CD8-positive, alpha-beta T cell (primary cell): ENCODE measurements at regions of chr16 and their contacts with region 1.

Region 1: DNA sequence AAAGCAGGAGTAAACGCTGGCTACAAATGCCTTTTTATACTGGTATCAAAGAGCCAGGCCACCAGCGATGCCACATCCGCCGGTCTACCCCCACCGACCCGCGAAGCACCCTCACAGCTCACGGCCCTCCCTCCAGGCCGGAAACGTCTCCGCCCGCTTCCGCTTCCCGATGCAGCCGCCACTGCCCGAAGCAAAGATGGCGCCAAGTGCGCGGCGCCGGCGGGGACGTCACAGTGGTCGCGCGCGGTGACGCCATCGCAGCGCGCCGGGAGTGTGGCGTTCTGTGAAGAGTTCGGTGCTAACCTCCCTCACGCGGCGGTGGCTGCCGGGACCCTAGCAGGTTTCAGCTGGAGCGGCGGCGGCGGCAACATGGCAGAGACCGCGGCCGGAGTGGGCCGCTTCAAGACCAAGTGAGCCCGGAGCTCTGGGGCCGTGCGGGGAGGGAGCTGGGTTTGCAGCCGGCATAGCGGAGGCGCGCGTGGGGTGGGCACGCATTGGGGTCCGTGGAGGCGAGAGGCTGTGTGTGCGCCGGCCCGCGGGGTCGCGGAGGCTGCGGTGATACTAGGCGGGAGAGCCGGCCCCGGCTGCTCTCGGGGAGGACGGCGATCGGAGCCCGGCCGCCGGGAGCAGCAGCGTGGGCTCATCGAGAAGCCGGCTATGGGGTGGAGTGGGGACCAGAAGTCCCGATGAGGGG is at the start of gene TBL3:
- DNase-seq: peak; percentile 91 to 99 (median 97)
- ATAC-seq: peak; percentile 96
- H3K4me3 ChIP-seq: peak within 1 kb of the TSS; percentile 76 to 91
- H3K4me3 Mint-ChIP-seq: peak within 1 kb of the TSS; percentile 93
- H3K27ac ChIP-seq: peak within 1 kb of the TSS; percentile 86 to 94
- H3K27ac Mint-ChIP-seq: peak within 1 kb of the TSS; percentile 97
- H3K4me1 ChIP-seq: peaks cover 17% of the 10 kb centered on the region
- H3K4me1 Mint-ChIP-seq: peaks cover 16% of the 10 kb centered on the region
- H3K27me3 ChIP-seq: no peaks in the 10 kb centered on the region
- H3K27me3 Mint-ChIP-seq: no peaks in the 10 kb centered on the region
- CTCF ChIP-seq: no peak
- total RNA-seq, gene TBL3: 15.4 to 16.6 TPM

Region 2: GRCh38 chr16:1705688-1706385 is 266.1 kb before region 1 on chr16 and contains the start of gene MAPK8IP3:
- CTCF ChIA-PET with region 1: no interaction called
- POLR2A ChIA-PET with region 1: no interaction called
- intact Hi-C with region 1: loop called in 1 of 2 experiments (anchors 1 kb)
- DNase-seq: peak; percentile 88 to 99 (median 95)
- ATAC-seq: peak; percentile 74
- H3K4me3 ChIP-seq: peak within 1 kb of the TSS; percentile 94 to 99
- H3K4me3 Mint-ChIP-seq: peak within 1 kb of the TSS; percentile 99
- H3K27ac ChIP-seq: peak within 1 kb of the TSS; percentile 83 to 90
- H3K27ac Mint-ChIP-seq: peak within 1 kb of the TSS; percentile 97
- H3K4me1 ChIP-seq: peaks cover 32% of the 10 kb centered on the region
- H3K4me1 Mint-ChIP-seq: peaks cover 43% of the 10 kb centered on the region
- H3K27me3 ChIP-seq: no peaks in the 10 kb centered on the region
- H3K27me3 Mint-ChIP-seq: no peaks in the 10 kb centered on the region
- CTCF ChIP-seq: peak; percentile 92
- total RNA-seq, gene MAPK8IP3: 381 to 419 TPM

Region 3: GRCh38 chr16:1772736-1773584 is 199.0 kb before region 1 on chr16 and contains the starts of genes EME2 and MRPS34:
- CTCF ChIA-PET with region 1: no interaction called
- POLR2A ChIA-PET with region 1: no interaction called
- intact Hi-C with region 1: no loop called
- DNase-seq: peak; percentile 54 to 89 (median 78)
- ATAC-seq: peak; percentile 48
- H3K4me3 ChIP-seq: peak within 1 kb of the TSS; percentile 79 to 91
- H3K4me3 Mint-ChIP-seq: peak within 1 kb of the TSS; percentile 96
- H3K27ac ChIP-seq: peak within 1 kb of the TSS; percentile 57 to 66
- H3K27ac Mint-ChIP-seq: peak within 1 kb of the TSS; percentile 96
- H3K4me1 ChIP-seq: peaks cover 30% of the 10 kb centered on the region
- H3K4me1 Mint-ChIP-seq: peaks cover 19% of the 10 kb centered on the region
- H3K27me3 ChIP-seq: no peaks in the 10 kb centered on the region
- H3K27me3 Mint-ChIP-seq: no peaks in the 10 kb centered on the region
- CTCF ChIP-seq: peak; percentile 92
- total RNA-seq, gene EME2: 27.5 to 31.7 TPM
- total RNA-seq, gene MRPS34: 18.9 to 21.4 TPM

Region 4: GRCh38 chr16:1959269-1960049 is 12.5 kb before region 1 on chr16 and contains the start of gene NDUFB10:
- CTCF ChIA-PET with region 1: interaction called, 7 read pairs
- POLR2A ChIA-PET with region 1: interaction called, 23 read pairs
- intact Hi-C with region 1: loop called (anchors 1 kb)
- DNase-seq: peak; percentile 80 to 96 (median 92)
- ATAC-seq: peak; percentile 86
- H3K4me3 ChIP-seq: peak within 1 kb of the TSS; percentile 91 to 95
- H3K4me3 Mint-ChIP-seq: peak within 1 kb of the TSS; percentile 90
- H3K27ac ChIP-seq: peak within 1 kb of the TSS; percentile 75 to 80
- H3K27ac Mint-ChIP-seq: peak within 1 kb of the TSS; percentile 89
- H3K4me1 ChIP-seq: peaks cover 39% of the 10 kb centered on the region
- H3K4me1 Mint-ChIP-seq: peaks cover 39% of the 10 kb centered on the region
- H3K27me3 ChIP-seq: no peaks in the 10 kb centered on the region
- H3K27me3 Mint-ChIP-seq: no peaks in the 10 kb centered on the region
- CTCF ChIP-seq: peak; percentile 59
- total RNA-seq, gene NDUFB10: 36.2 to 38.4 TPM

Region 5: DNA sequence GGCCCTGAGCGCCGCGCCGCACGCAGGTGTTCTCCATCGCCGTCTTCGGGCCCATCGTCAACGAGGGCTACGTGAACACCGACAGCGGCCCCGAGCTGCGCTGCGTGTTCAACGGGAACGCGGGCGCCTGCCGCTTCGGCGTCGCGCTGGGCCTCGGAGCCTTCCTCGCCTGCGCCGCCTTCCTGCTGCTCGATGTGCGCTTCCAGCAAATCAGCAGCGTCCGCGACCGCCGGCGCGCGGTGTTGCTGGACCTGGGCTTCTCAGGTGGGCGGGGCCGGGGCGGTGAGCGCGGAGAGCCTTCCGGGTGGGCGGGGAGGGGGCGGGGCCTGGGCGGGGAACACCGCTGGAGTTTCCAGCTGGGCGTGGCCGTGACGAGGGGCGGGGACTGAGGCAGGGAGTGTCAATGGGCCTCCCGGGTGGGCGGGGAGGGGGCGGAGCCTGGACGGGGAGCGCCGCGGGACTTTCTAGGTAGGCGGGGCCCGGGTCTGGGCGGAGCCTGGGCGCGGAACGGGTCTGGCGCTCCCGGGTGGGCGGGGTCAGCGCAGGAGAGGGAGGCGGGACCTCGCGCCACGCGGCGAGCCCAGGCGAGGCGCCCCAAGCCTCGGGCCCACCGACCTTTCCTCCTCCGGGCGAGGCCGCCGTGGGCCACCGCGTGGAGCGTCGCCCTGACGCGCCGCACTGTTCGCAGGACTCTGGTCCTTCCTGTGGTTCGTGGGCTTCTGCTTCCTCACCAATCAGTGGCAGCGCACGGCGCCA is 20.2 kb after region 1 on chr16:
- CTCF ChIA-PET with region 1: no interaction called
- POLR2A ChIA-PET with region 1: interaction called, 15 read pairs
- intact Hi-C with region 1: loop called in 1 of 2 experiments (anchors 1 kb)
- DNase-seq: peak; percentile 95 to 99 (median 97)
- ATAC-seq: peak; percentile 88
- H3K4me3 ChIP-seq: peak overlapping the region; percentile 53 to 60
- H3K4me3 Mint-ChIP-seq: peak overlapping the region; percentile 39
- H3K27ac ChIP-seq: peak overlapping the region; percentile 27 to 45
- H3K27ac Mint-ChIP-seq: peak overlapping the region; percentile 80
- H3K4me1 ChIP-seq: peaks cover 19% of the 10 kb centered on the region
- H3K4me1 Mint-ChIP-seq: peaks cover 26% of the 10 kb centered on the region
- H3K27me3 ChIP-seq: peaks cover 9 to 13% of the 10 kb centered on the region in 2 experiments
- H3K27me3 Mint-ChIP-seq: peaks cover 9% of the 10 kb centered on the region
- CTCF ChIP-seq: no peak

Region 6: GRCh38 chr16:2047330-2048115 is 75.6 kb after region 1 on chr16 and contains the starts of genes NTHL1 and TSC2:
- CTCF ChIA-PET with region 1: no interaction called
- POLR2A ChIA-PET with region 1: interaction called, 4 read pairs
- intact Hi-C with region 1: loop called (anchors 1 to 5 kb)
- DNase-seq: peak; percentile 82 to 96 (median 92)
- ATAC-seq: peak; percentile 89
- H3K4me3 ChIP-seq: peak within 1 kb of the TSS; percentile 90 to 93
- H3K4me3 Mint-ChIP-seq: peak within 1 kb of the TSS; percentile 91
- H3K27ac ChIP-seq: peak within 1 kb of the TSS; percentile 60 to 64
- H3K27ac Mint-ChIP-seq: peak within 1 kb of the TSS; percentile 62
- H3K4me1 ChIP-seq: peaks cover 17% of the 10 kb centered on the region
- H3K4me1 Mint-ChIP-seq: peaks cover 24% of the 10 kb centered on the region
- H3K27me3 ChIP-seq: no peaks in the 10 kb centered on the region
- H3K27me3 Mint-ChIP-seq: no peaks in the 10 kb centered on the region
- CTCF ChIP-seq: peak; percentile 39
- total RNA-seq, gene NTHL1: 1.7 to 2.0 TPM
- total RNA-seq, gene TSC2: 76.2 to 84.1 TPM